Gastrocnemius medialis (tissue), 4 donors: ENCODE measurements at regions of chr17 and their contacts with region 1.

Region 1: GRCh38 chr17:59266751-59267150 is 46.4 kb downstream of the GDPD1 start:
- DNase-seq: no peak
- ATAC-seq: no peak
- H3K4me3 ChIP-seq: no peak overlapping the region
- H3K27ac ChIP-seq: no peak overlapping the region
- H3K4me1 ChIP-seq: no peaks in the 10 kb centered on the region
- H3K27me3 ChIP-seq: no peaks in the 10 kb centered on the region
- CTCF ChIP-seq: no peak
- POLR2A ChIP-seq: no peak

Region 2: GRCh38 chr17:60468371-60468770 is 1201.6 kb after region 1 on chr17:
- in situ Hi-C with region 1: loop called in 1 of 4 experiments (anchors 25 kb)
- intact Hi-C with region 1: no loop called
- DNase-seq: no peak
- ATAC-seq: no peak
- H3K4me3 ChIP-seq: no peak overlapping the region
- H3K27ac ChIP-seq: peak overlapping the region; percentile 35 to 61 (median 45)
- H3K4me1 ChIP-seq: peaks cover 27 to 37% of the 10 kb centered on the region in 2 donors
- H3K27me3 ChIP-seq: no peaks in the 10 kb centered on the region
- CTCF ChIP-seq: no peak
- POLR2A ChIP-seq: no peak